ENCODE measurements at regions of chr12 and their contacts with region 1.

Region 1: DNA sequence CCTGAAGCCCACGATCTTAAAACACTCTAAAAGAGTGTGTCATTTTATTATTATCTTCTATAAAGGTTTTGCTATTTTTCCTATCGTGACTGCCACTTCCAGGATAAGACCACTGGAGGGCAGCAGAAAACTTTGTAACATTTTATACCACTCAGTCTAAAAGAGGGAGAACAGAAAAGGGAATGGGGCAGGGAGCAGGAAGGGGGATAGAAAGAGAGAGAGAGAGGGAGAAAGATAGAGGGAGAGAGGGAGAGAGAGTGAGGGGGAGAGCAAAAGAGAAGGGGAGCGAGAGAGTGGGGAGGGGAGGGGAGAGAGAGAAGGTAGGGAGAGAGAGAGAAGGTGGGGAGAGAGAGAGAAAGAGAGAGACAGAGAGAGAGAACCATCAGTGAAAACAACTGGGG is 2.0 kb upstream of the ART4 start:
- DNase-seq: peak in 2 of 4 donors; percentile 54 to 69
- ATAC-seq: peak; percentile 79
- H3K4me3 ChIP-seq: no peak overlapping the region
- H3K27ac ChIP-seq: peak overlapping the region in 1 of 2 donors; percentile 47
- H3K4me1 ChIP-seq: peaks cover 17 to 21% of the 10 kb centered on the region in 2 donors
- H3K27me3 ChIP-seq: no peaks in the 10 kb centered on the region
- CTCF ChIP-seq: peak; percentile 65 to 73

Region 2: GRCh38 chr12:14691560-14691959 is 153.8 kb before region 1 on chr12:
- intact Hi-C with region 1: no loop called
- DNase-seq: peak in 2 of 4 donors; percentile 23 to 75
- ATAC-seq: peak; percentile 81
- H3K4me3 ChIP-seq: no peak overlapping the region
- H3K27ac ChIP-seq: no peak overlapping the region
- H3K4me1 ChIP-seq: no peaks in the 10 kb centered on the region
- H3K27me3 ChIP-seq: no peaks in the 10 kb centered on the region
- CTCF ChIP-seq: no peak

Region 3: DNA sequence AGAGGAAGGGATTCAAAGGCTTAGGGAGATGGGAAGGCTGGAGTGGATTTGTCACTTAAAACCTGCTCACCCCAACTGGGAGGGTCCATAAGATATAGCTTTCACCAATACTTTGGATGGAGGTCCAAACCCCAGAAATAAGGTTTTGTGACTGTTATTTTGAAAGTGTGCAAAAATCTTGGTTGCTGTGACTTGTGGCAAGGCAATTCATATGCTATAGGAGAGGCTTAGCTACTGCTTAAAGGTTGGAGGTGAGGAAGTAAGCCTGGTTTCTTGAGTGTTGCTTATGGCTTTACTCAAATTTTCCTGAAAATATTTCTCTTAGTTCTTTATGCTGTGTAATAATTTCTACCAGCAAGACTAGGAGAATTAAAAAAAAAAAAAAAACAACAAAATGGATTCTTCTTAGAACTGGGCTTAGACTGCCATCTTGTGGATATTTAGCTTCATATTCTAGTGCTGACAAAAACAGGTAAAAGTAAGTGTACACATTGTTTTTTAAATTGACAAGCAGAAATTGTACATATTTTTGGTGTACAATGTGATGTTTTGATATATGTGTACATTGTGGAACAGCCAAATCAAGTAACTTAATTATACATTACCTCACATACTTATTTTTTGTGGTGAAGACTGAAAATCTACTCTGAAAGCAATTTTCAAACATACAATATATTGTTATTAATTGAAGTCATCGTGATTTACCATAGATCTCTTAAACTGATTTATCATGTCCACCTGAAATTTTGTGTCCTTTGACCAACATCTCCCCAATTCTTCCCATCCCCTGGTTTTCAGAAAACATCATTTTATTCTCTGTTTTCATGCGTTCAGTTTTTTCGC is 150.5 kb after region 1 on chr12:
- intact Hi-C with region 1: loop called (anchors 5 to 10 kb)
- DNase-seq: peak in 2 of 4 donors; percentile 47 to 73
- ATAC-seq: peak; percentile 87
- H3K4me3 ChIP-seq: no peak overlapping the region
- H3K27ac ChIP-seq: no peak overlapping the region
- H3K4me1 ChIP-seq: peaks cover 0 to 30% of the 10 kb centered on the region in 2 donors
- H3K27me3 ChIP-seq: no peaks in the 10 kb centered on the region
- CTCF ChIP-seq: peak; percentile 56 to 70